ENCODE measurements at regions of chr1 and their contacts with region 1.

Region 1: DNA sequence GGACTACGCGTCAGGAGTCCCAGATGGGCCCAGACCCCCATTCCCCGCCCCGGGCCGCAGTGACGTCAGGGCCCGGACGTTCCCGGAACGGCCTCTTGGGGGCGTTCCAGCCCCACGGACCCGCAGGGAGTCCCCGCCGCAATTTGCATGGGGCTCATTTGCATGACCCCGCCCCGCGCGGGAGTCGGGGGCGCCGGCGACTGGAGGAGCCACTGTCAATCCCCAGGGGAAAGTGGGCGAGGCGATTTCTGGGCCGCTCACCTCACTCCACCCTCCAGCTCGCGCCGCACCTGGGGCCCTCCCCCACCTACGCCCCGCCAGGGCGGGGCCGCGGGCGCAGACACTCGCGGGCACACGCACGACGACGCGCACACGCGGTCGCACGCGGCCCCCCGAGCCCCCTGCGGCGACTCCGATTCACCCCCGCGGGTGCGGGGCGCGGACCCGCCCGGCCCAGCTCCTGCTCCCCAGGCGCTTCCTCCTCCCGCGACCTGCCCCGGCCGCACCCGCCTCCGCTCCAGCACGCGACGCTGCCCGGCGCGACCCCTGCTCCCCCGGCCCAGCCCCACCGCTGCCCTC is 13.2 kb downstream of the AGRN start:
- DNase-seq: peak; percentile 90 to 96 (median 92)
- ATAC-seq: peak; percentile 99
- H3K4me3 ChIP-seq: peak overlapping the region; percentile 35
- H3K27ac ChIP-seq: peak overlapping the region; percentile 52; the same call in 1 of the 3 replicates
- H3K4me1 ChIP-seq: peaks cover 0 to 65% of the 10 kb centered on the region in 2 experiments; a peak in 3 of 5 replicates
- H3K27me3 ChIP-seq: no peaks in the 10 kb centered on the region
- CTCF ChIP-seq: peak; percentile 85 to 93 (median 89)
- EP300 ChIP-seq: no peak
- POLR2A ChIP-seq: no peak
- RAD21 ChIP-seq: peak; percentile 83

Region 2: GRCh38 chr1:1115786-1116700 is 82.9 kb after region 1 on chr1 and contains the start of gene C1orf159:
- CTCF ChIA-PET with region 1: no interaction called
- POLR2A ChIA-PET with region 1: interaction called, 3 read pairs
- in situ Hi-C with region 1: no loop called
- intact Hi-C with region 1: loop called (anchors 1 kb)
- DNase-seq: peak; percentile 96 to 99 (median 98)
- ATAC-seq: peak; percentile 98
- H3K4me3 ChIP-seq: peak within 1 kb of the TSS; percentile 96
- H3K27ac ChIP-seq: peak within 1 kb of the TSS; percentile 87
- H3K4me1 ChIP-seq: peaks cover 0 to 41% of the 10 kb centered on the region in 2 experiments; a peak in 2 of 5 replicates
- H3K27me3 ChIP-seq: peaks cover 25 to 36% of the 10 kb centered on the region in 2 experiments; a peak in 4 of 5 replicates
- CTCF ChIP-seq: no peak; a peak in 1 of 6 replicates
- EP300 ChIP-seq: no peak
- POLR2A ChIP-seq: peak; percentile 68
- RAD21 ChIP-seq: no peak
- polyA plus RNA-seq, gene C1orf159: 0.28 to 0.60 TPM